ENCODE measurements at regions of chr17 and their contacts with region 1.

Region 1: GRCh38 chr17:28902819-28903545 is at the start of gene DHRS13:
- DNase-seq: peak; percentile 85 to 93 (median 92)
- H3K4me3 ChIP-seq: peak within 1 kb of the TSS; percentile 53
- H3K27ac ChIP-seq: peak within 1 kb of the TSS; percentile 69 to 79
- H3K4me1 ChIP-seq: peaks cover under 1% of the 10 kb centered on the region
- H3K27me3 ChIP-seq: no peaks in the 10 kb centered on the region
- CTCF ChIP-seq: peak; percentile 68 to 90 (median 85)
- EP300 ChIP-seq: no peak
- POLR2A ChIP-seq: no peak
- total RNA-seq, gene DHRS13: 7.3 to 13.8 (median 8.1) TPM

Region 2: GRCh38 chr17:28750178-28751047 is 152.6 kb before region 1 on chr17:
- intact Hi-C with region 1: loop called in 1 of 4 experiments (anchors 10 kb)
- DNase-seq: peak; percentile 89 to 95 (median 93)
- H3K4me3 ChIP-seq: no peak overlapping the region
- H3K27ac ChIP-seq: no peak overlapping the region
- H3K4me1 ChIP-seq: peaks cover 8% of the 10 kb centered on the region
- H3K27me3 ChIP-seq: no peaks in the 10 kb centered on the region
- CTCF ChIP-seq: peak; percentile 97 to 99 (median 98)
- EP300 ChIP-seq: no peak
- POLR2A ChIP-seq: no peak

Region 3: DNA sequence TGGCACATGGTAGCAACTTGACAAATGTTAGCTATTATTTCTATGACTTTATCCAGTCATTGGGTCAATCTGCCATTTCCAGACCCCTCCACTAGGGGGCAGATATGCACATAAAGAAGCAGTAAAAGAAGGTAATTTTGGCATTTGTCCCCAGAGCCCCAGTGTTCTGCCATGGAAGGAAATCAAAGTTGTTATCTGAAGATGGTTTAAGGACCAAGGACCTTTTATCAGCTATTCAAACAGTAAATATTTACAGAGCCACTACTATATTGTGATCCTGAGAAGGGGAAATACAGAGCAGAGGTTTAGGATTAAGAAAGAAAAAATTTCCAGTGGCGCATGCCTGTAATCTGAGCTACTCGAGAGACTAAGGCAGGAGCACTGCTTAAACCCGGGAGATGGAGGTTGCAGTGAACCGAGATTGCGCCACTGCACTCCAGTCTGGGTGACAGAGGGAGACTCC is 139.1 kb before region 1 on chr17:
- intact Hi-C with region 1: loop called in 2 of 4 experiments (anchors 5 to 10 kb)
- DNase-seq: peak in 4 of 5 donors; percentile 60 to 88 (median 72)
- H3K4me3 ChIP-seq: no peak overlapping the region
- H3K27ac ChIP-seq: no peak overlapping the region
- H3K4me1 ChIP-seq: no peaks in the 10 kb centered on the region
- H3K27me3 ChIP-seq: no peaks in the 10 kb centered on the region
- CTCF ChIP-seq: peak; percentile 78 to 90 (median 84)
- EP300 ChIP-seq: no peak
- POLR2A ChIP-seq: no peak

Region 4: DNA sequence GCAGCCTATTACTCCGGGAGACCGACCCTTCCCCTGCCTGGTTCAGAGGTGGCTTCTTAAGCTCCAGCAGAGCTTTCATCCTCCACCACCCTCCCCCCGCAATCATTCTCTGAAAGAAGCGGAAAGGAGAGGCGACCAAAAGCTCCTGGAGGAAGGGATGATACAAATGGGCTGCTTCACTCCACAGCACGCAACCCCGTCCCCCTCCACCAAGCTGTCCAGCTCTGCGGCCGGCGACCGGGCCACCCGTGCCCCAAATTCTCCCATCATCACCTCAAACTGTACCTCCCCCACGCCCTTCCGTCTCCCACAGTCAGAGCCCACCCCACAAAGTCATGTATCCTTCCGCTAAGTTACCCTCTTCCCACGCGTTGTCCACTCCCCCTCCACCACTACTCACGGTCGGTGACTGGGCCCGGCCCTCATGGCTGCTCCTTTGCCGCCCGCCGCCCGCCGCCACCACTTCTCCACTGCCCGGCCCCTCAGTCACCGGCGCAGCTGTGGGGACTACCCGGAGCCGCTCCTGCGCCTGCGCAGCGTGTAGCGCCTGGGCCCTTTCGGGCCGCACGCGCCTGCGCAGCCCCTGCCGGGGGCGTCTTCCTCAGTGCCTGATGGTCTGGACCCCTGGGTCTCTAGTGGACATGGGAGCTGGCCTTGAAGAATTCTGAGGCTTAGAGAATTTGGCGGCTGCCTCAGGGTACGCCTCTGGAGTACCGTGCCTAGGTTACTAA is 60.5 kb before region 1 on chr17 and contains the start of gene FAM222B:
- intact Hi-C with region 1: loop called in 1 of 4 experiments (anchors 10 kb)
- DNase-seq: peak; percentile 75 to 88 (median 80)
- H3K4me3 ChIP-seq: peak within 1 kb of the TSS; percentile 85
- H3K27ac ChIP-seq: peak within 1 kb of the TSS in 1 of 2 donors; percentile 62
- H3K4me1 ChIP-seq: peaks cover 2% of the 10 kb centered on the region
- H3K27me3 ChIP-seq: no peaks in the 10 kb centered on the region
- CTCF ChIP-seq: no peak
- EP300 ChIP-seq: no peak
- POLR2A ChIP-seq: peak; percentile 62
- total RNA-seq, gene FAM222B: 8.0 to 19.8 (median 17.9) TPM

Region 5: GRCh38 chr17:28946239-28946638 is 43.3 kb after region 1 on chr17:
- intact Hi-C with region 1: no loop called
- DNase-seq: no peak
- H3K4me3 ChIP-seq: no peak overlapping the region
- H3K27ac ChIP-seq: no peak overlapping the region
- H3K4me1 ChIP-seq: peaks cover 12% of the 10 kb centered on the region
- H3K27me3 ChIP-seq: no peaks in the 10 kb centered on the region
- CTCF ChIP-seq: no peak
- EP300 ChIP-seq: no peak
- POLR2A ChIP-seq: no peak

Measured in ovary (tissue), 10 donors.